ENCODE measurements at regions of chr16 and their contacts with region 1.

Region 1: DNA sequence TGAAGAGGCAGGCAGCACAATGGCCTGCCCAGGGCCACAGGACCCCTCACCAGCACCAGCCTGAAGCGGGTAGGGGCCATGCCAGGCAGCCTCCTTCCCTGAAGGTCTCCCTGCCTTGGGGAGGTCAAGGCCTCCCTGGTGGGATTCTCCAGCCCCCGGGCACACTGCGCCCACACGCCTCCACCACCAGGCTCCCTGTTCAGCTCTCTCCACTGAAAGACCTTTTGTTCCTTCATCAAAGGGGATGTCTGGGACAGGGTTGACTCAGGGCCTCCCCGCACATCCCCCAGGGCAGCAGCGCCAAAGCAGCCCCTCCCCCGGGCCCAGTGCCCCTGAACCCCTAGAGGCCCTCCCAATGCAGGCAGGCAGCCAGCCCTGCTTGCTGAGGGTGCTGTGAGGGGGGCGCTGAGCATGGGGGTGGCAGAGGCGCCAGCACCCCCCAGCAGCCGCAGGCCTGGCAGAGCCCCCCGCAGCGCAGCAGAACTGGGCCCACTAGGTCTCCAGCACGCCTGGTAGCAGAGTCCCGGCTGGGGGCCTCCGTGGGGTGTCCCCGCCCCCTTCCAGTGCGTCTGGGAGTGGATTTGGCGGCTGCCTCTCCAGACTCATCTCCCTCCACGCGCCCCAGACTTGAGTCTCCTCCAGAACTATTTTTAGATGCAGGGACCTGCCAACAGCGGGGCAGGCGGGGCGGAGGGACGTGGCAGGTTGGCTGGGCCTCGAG is 13.1 kb downstream of the BCAR1 start:
- DNase-seq: peak; percentile 71
- H3K4me3 ChIP-seq: peak overlapping the region in 1 of 2 experiments; percentile 41; a peak in 2 of 4 replicates
- H3K27ac ChIP-seq: peak overlapping the region; percentile 85 to 95
- H3K4me1 ChIP-seq: peaks cover 41 to 57% of the 10 kb centered on the region in 2 experiments
- H3K27me3 ChIP-seq: no peaks in the 10 kb centered on the region
- CTCF ChIP-seq: peak; percentile 9; the same call in 1 of the 2 replicates
- EP300 ChIP-seq: peak in 1 of 2 experiments; percentile 39; a peak in 1 of 4 replicates
- RAD21 ChIP-seq: no peak

Region 2: DNA sequence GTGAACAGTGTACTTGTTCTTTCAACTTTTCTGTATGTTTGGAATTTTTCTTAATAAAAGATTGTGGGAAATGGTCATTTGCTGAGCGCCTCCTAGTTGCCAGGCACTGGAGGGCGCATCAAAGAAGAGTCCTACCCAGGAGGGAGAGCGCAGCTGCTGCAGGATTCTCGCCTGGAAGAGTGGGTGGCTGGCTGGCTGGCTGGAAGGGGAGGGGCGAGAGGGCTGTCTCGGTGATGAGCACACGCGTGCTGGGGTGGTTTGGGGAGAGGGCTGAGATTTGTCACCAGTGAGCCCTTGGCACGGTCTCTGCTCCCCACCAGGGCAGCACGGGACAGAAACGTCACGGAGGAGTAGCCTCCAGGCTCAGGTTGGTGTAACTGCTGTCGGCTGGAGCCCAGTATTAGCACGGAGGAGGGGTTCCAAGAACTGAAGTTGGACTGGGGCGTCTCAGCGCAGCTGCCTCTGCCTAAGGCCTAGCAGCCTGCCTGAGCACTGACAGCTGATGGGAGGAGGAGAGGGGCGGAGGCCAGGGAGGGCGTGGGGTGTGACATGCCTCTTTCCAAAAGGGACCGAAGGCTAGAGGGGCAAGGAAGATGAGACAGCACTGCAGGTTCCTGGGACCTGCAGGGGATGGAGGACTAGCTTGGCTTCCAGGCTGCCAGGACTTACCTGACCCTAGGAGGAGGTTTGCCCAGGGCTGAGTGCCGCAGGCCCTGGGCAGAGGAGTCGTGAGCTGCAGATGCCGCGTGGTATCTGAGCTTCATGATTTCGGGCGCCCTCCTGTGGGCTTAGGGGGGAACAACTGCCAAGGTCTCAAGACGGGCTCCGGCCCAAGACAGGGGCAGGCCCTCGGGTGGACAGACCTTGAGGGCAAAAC is 127.4 kb before region 1 on chr16:
- CTCF ChIA-PET with region 1: no interaction called
- POLR2A ChIA-PET with region 1: no interaction called
- DNase-seq: peak; percentile 91
- H3K4me3 ChIP-seq: peak overlapping the region; percentile 18 to 37; a peak in 3 of 4 replicates
- H3K27ac ChIP-seq: peak overlapping the region; percentile 73 to 86
- H3K4me1 ChIP-seq: peaks cover 36 to 50% of the 10 kb centered on the region in 2 experiments; a peak in 3 of 4 replicates
- H3K27me3 ChIP-seq: no peaks in the 10 kb centered on the region
- CTCF ChIP-seq: peak; percentile 86
- EP300 ChIP-seq: no peak
- RAD21 ChIP-seq: peak; percentile 91

Region 3: DNA sequence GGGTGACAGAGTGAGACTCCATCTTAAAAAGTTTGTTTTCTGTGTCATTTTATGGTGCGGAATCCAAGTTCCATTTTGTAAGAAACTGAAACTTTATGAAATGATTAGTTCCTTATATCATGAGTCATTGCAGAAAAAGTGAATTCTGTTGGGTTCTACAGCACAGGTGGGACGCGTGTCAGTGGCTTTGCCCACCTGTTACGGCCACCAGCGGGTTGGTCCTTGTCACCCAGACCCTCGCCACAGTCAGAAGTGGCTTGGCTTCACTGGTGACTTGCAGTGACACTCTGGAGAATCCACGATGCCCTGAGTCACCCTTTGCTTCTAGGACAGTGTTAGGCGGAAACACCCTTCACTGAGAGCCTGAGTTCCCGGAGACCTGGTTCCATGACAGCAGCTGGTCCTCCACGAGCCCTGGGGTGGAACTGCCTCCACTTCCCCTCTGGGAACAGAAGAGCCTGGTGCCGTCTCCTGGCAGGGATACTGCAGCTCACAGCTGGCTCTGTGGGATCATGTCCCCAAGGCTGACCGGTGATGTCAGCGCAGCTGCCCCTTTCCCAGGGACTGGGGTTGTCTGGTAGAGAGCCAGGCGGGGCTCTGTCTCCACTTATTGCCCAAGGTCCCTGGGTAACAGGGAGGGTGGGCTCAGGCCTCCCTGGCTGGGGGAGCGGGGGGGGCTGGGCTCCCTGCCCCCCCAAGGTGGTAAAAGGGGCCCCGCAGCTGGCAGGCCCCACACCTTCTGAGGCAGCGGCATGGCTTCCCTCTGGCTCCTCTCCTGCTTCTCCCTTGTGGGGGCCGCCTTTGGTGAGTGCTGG is 19.8 kb before region 1 on chr16 and contains the start of gene CTRB1:
- CTCF ChIA-PET with region 1: interaction called, 21 read pairs
- POLR2A ChIA-PET with region 1: no interaction called
- DNase-seq: peak; percentile 57
- H3K4me3 ChIP-seq: no peak within 1 kb of the TSS
- H3K27ac ChIP-seq: peak within 1 kb of the TSS in 1 of 2 experiments; percentile 12; a peak in 1 of 4 replicates
- H3K4me1 ChIP-seq: peaks cover 0 to 6% of the 10 kb centered on the region in 2 experiments; a peak in 1 of 4 replicates
- H3K27me3 ChIP-seq: no peaks in the 10 kb centered on the region
- CTCF ChIP-seq: no peak
- EP300 ChIP-seq: no peak
- RAD21 ChIP-seq: no peak
- polyA plus RNA-seq, gene CTRB1: not detected in 2 replicates

Region 4: DNA sequence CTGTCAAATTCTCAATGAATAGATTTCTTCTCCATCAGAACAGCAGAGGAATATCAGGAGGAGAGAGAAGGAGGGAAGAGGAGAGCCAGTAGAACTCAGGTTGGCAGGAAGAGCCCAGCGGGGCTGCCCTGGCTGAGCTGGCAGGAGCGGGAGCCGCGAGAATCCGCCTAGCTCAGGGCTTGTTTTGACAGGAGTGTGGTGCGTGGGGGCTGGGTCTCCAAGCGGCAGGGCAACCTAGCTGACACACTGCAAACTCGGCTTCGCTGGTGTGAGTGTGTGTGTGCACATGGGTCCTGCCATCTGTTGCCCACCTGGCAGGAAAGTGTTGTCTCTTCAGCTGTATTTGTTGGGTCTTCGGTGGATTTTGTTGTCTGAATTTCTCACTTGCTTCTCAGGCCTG is 41.0 kb after region 1 on chr16:
- CTCF ChIA-PET with region 1: interaction called, 35 read pairs
- POLR2A ChIA-PET with region 1: no interaction called
- DNase-seq: no peak
- H3K4me3 ChIP-seq: no peak overlapping the region
- H3K27ac ChIP-seq: no peak overlapping the region
- H3K4me1 ChIP-seq: peaks cover 0 to 22% of the 10 kb centered on the region in 2 experiments; a peak in 1 of 4 replicates
- H3K27me3 ChIP-seq: no peaks in the 10 kb centered on the region
- CTCF ChIP-seq: no peak
- EP300 ChIP-seq: no peak
- RAD21 ChIP-seq: no peak

Region 5: GRCh38 chr16:75342308-75342829 is 104.1 kb after region 1 on chr16:
- CTCF ChIA-PET with region 1: interaction called, 12 read pairs
- POLR2A ChIA-PET with region 1: no interaction called
- DNase-seq: no peak
- H3K4me3 ChIP-seq: no peak overlapping the region
- H3K27ac ChIP-seq: peak overlapping the region; percentile 80 to 81
- H3K4me1 ChIP-seq: peaks cover 29 to 44% of the 10 kb centered on the region in 2 experiments
- H3K27me3 ChIP-seq: no peaks in the 10 kb centered on the region
- CTCF ChIP-seq: no peak
- EP300 ChIP-seq: peak in 1 of 2 experiments; percentile 13; a peak in 1 of 4 replicates
- RAD21 ChIP-seq: no peak

Region 6: DNA sequence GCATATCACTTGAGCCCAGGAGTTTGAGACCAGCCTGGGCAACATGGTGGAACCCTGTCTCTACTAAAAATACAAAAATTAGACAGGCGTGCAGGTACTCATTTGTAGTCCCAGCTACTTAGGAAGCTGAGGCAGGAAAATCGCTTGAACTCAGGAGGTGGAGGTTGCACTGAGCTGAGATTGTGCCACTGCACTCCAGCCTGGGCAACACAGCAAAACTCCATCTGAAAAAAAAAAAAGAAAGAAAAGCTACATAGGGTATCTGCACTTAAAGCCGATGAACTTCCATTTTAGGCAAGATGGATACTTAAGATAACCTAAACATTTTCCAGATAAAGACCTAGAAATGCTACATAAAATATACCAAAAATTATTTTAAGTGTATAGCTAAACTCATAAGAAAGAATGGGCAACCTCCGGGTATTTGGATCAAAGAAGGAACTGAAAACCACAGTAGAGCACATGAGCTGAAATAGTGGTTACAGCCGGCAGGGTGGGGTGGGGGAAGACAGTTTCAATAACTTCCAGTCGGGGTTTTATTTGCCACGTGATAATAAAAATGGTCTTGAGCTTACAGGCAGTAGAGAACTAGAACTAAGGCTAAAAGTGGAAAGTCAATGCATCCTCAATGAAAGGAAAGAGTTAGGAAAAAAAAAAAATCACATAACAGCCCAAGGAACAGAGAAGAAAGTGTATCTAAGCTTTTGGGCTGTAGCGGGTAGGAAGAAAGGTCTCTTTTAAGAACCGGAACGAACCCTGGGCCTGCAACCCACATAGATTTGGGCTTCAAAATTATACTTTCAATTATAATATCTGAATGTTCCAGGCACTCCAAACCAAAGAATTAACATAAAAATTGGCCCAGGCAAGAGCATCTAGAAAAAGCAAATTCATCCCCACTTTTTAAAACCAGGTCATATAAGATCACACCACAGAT is 141.9 kb after region 1 on chr16:
- CTCF ChIA-PET with region 1: interaction called, 72 read pairs
- POLR2A ChIA-PET with region 1: interaction called, 5 read pairs
- DNase-seq: no peak
- H3K4me3 ChIP-seq: no peak overlapping the region
- H3K27ac ChIP-seq: peak overlapping the region in 1 of 2 experiments; percentile 48; a peak in 2 of 4 replicates
- H3K4me1 ChIP-seq: peaks cover 7 to 36% of the 10 kb centered on the region in 2 experiments
- H3K27me3 ChIP-seq: no peaks in the 10 kb centered on the region
- CTCF ChIP-seq: no peak
- EP300 ChIP-seq: no peak
- RAD21 ChIP-seq: no peak

Region 7: GRCh38 chr16:75392911-75393310 is 154.6 kb after region 1 on chr16:
- CTCF ChIA-PET with region 1: interaction called, 56 read pairs
- POLR2A ChIA-PET with region 1: no interaction called
- DNase-seq: no peak
- H3K4me3 ChIP-seq: no peak overlapping the region
- H3K27ac ChIP-seq: no peak overlapping the region
- H3K4me1 ChIP-seq: peaks cover 0 to 12% of the 10 kb centered on the region in 2 experiments; a peak in 2 of 4 replicates
- H3K27me3 ChIP-seq: no peaks in the 10 kb centered on the region
- CTCF ChIP-seq: no peak
- EP300 ChIP-seq: no peak
- RAD21 ChIP-seq: no peak